ENCODE measurements at regions of chr12 and their contacts with region 1.

Region 1: GRCh38 chr12:3252450-3252891 is 175.3 kb downstream of the TSPAN9 start:
- DNase-seq: peak; percentile 94
- ATAC-seq: peak; percentile 67

Region 2: GRCh38 chr12:3046446-3047200 is 205.8 kb before region 1 on chr12:
- intact Hi-C with region 1: loop called (anchors 1 kb)
- DNase-seq: no peak
- ATAC-seq: peak; percentile 88

Region 3: GRCh38 chr12:3236345-3237187 is 15.9 kb before region 1 on chr12:
- intact Hi-C with region 1: loop called (anchors 2 kb)
- DNase-seq: no peak
- ATAC-seq: peak; percentile 71